ENCODE measurements at regions of chr9 and their contacts with region 1.

Region 1: DNA sequence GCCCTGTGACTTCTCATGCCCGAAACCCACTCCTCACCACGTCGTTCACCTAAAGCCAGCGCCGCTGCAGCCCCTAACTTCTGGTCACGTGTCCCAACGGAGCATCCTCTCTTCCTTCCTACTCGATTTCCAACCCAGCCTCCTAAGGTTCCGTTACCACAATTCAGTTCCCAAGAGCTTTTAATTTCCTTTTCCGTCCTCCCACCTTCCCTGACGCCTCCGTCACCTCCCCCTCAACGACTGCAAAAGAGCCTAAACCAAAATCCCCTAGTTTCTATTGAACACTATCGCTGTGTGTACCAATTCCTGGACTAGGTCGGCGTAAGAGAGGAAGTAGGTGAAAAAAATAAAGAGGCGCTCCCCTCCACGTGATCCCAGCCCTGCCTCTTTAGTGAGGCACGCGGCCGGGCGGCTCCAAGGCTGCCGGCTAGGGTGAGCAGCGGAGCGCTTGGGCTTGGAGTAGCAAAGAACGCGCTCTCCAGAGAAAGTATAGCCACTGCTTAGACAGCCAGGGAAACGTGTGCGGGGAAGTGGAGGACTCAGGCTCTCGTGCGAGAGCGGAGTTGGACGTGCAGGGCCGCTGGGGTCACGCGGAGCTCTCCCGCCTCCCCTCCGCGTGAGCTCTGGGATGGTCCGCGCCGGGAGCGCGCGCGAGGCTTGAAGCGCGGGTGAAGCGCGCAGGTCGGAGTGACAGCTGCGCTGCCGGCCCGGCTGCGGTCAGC is at the starts of genes CENPP and NOL8:
- DNase-seq: peak; percentile 95
- H3K4me3 ChIP-seq: peak within 1 kb of the TSS; percentile 66 to 98 (median 87)
- H3K27ac ChIP-seq: peak within 1 kb of the TSS; percentile 90 to 98 (median 97)
- H3K4me1 ChIP-seq: peaks cover 14 to 60% (median 29%) of the 10 kb centered on the region in 6 donors
- H3K27me3 ChIP-seq: no peaks in the 10 kb centered on the region
- CTCF ChIP-seq: peak in 1 of 11 experiments; percentile 28
- POLR2A ChIP-seq: peak in 1 of 3 donors; percentile 23
- total RNA-seq, gene CENPP: 5.4 to 15.8 (median 6.9) TPM
- total RNA-seq, gene NOL8: 37.0 to 70.6 (median 43.4) TPM

Region 2: DNA sequence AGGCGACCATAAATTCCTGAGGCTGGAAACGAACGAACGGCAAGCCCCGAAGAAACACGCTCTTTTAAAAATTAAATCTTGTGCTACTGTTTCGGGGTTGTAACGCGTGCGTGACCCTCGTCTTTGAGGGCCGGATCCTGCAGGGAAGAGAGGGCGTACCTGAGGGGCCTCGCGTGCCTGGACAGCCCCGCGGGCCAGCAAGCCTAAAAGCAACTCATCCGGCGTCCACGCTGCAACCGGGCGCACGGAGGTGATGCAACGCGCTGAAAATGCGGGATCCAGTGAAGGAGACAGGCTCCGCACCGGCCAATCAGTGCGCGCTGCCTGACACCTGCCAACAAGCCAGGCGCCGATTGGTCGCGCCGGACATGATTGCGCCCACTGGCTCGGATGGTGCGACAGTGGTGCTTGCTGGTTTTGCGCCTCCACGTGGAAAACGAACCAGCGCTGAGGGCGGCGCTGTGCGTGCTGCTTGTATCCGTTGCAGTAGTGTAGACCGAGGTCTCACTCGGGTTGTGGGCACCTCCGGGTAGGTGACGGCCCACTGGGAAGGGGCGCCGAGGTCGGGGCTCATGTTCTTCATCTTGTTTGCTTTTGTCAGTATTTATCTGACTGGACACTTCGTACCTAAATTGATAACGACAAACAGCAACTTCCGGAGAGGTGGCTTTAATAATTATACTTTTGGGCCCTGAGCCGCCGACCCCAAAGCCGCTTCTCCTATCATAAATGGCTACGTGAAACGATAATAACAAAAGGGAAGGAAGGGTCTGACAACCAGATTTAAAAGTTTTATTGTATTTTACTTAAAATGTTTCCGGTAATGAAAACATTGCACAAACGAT is 31.8 kb before region 1 on chr9 and contains the start of gene IARS1:
- intact Hi-C with region 1: loop called (anchors 5 kb)
- DNase-seq: peak; percentile 98
- H3K4me3 ChIP-seq: peak within 1 kb of the TSS; percentile 61 to 85 (median 76)
- H3K27ac ChIP-seq: peak within 1 kb of the TSS; percentile 66 to 91 (median 86)
- H3K4me1 ChIP-seq: peaks cover 21 to 74% (median 37%) of the 10 kb centered on the region in 6 donors
- H3K27me3 ChIP-seq: no peaks in the 10 kb centered on the region
- CTCF ChIP-seq: peak in 6 of 11 experiments; percentile 30 to 59 (median 38)
- POLR2A ChIP-seq: peak in 1 of 3 donors; percentile 80
- total RNA-seq, gene IARS1: 58.3 to 110 (median 71.5) TPM

Measured in spleen (tissue), 13 donors.